Activated CD8-positive, alpha-beta memory T cell treated with anti-CD3 and anti-CD28 coated beads, Interleukin-2, amount 10 ng/mL, durations not matched to agents 7 days and 5 days (primary cell): ENCODE measurements at regions of chr12 and their contacts with region 1.

Region 1: GRCh38 chr12:26884765-26885576 is 52.0 kb upstream of the ITPR2 start:
- DNase-seq: peak; percentile 90
- ATAC-seq: peak; percentile 92
- H3K4me3 Mint-ChIP-seq: peak overlapping the region; percentile 60
- H3K27ac Mint-ChIP-seq: no peak overlapping the region
- H3K4me1 Mint-ChIP-seq: peaks cover 15% of the 10 kb centered on the region
- H3K27me3 Mint-ChIP-seq: peaks cover 21% of the 10 kb centered on the region

Region 2: DNA sequence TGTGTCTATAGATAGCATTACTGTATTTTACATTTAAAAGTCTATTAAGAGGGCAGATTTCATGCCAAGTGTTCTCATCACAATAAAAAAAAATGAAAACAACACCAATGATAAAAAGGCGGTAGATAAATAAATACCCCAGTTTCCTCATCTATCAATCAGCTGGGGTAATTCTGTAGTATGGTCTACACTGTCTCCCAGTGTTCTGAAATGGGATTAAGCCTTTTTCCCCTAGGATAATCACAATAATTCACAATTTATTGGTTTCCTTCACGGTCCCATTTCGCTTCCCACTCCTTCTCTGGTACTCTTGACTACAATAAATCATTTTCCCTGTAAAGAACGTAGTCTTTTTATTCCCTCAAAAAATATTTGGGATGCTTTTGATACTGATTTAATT is 575.3 kb before region 1 on chr12:
- CTCF ChIA-PET with region 1: no interaction called
- DNase-seq: no peak
- ATAC-seq: no peak
- H3K4me3 Mint-ChIP-seq: no peak overlapping the region
- H3K27ac Mint-ChIP-seq: no peak overlapping the region
- H3K4me1 Mint-ChIP-seq: no peaks in the 10 kb centered on the region
- H3K27me3 Mint-ChIP-seq: peaks cover 48% of the 10 kb centered on the region

Region 3: GRCh38 chr12:26360062-26360461 is 524.9 kb before region 1 on chr12:
- CTCF ChIA-PET with region 1: no interaction called
- DNase-seq: no peak
- ATAC-seq: no peak
- H3K4me3 Mint-ChIP-seq: no peak overlapping the region
- H3K27ac Mint-ChIP-seq: no peak overlapping the region
- H3K4me1 Mint-ChIP-seq: no peaks in the 10 kb centered on the region
- H3K27me3 Mint-ChIP-seq: no peaks in the 10 kb centered on the region

Region 4: DNA sequence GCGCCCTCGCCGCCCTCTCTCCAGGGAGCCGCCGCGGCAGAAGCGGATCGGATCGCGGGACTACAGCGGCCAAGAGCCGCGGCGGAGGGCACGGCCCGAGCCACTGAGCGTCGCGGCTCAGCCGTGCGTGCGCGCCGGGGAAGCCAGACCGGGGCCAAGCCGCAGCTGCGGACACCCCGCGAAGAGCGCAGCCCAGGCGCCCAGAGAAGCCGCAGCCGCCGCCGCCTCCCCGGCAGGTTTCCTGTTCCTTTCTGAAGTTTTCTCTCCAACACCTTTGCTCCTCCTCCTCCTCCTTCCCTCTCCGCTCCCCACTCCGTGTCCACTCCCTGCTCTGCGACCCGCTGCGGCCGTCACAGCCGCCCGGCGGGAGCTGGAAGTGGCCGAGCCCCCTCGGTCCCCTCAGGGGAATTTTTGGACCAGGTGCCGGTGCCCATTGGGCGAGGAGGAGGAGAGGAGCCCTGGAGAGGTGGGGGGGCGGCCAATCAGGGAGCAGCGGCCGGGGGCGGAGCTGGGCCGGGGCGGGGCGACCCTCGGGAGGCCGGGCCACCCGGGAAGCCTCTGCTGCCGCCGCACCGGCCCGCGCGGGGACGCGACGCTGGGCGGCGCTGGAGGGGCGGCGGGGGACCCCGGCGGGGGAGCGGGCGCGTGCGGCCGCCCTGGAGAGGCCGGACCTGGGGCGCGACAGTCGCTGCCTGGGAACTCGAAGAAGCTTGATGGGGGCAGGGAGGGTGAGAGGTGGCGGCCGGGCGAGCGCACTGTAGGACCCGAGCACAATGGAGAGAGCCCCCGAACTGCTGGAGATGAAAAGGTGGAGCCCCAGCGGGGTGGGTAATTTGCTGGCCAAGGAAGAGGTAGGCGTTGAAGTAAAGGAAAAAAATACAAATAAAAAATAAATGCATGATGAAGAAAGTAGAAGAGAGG is 51.9 kb before region 1 on chr12 and contains the start of gene ITPR2:
- CTCF ChIA-PET with region 1: interaction called, 34 read pairs
- DNase-seq: peak; percentile 95
- ATAC-seq: peak; percentile 92
- H3K4me3 Mint-ChIP-seq: peak within 1 kb of the TSS; percentile 94
- H3K27ac Mint-ChIP-seq: peak within 1 kb of the TSS; percentile 99
- H3K4me1 Mint-ChIP-seq: peaks cover 36% of the 10 kb centered on the region
- H3K27me3 Mint-ChIP-seq: no peaks in the 10 kb centered on the region
- total RNA-seq, gene ITPR2: 31.1 to 37.7 TPM

Region 5: GRCh38 chr12:26853303-26854030 is 31.5 kb before region 1 on chr12:
- CTCF ChIA-PET with region 1: interaction called, 34 read pairs
- DNase-seq: peak; percentile 84
- ATAC-seq: peak; percentile 95
- H3K4me3 Mint-ChIP-seq: no peak overlapping the region
- H3K27ac Mint-ChIP-seq: peak overlapping the region; percentile 41
- H3K4me1 Mint-ChIP-seq: no peaks in the 10 kb centered on the region
- H3K27me3 Mint-ChIP-seq: peaks cover 12% of the 10 kb centered on the region

Region 6: GRCh38 chr12:26896913-26897312 is 11.9 kb after region 1 on chr12:
- CTCF ChIA-PET with region 1: interaction called, 13 read pairs
- DNase-seq: no peak
- ATAC-seq: no peak
- H3K4me3 Mint-ChIP-seq: no peak overlapping the region
- H3K27ac Mint-ChIP-seq: no peak overlapping the region
- H3K4me1 Mint-ChIP-seq: no peaks in the 10 kb centered on the region
- H3K27me3 Mint-ChIP-seq: no peaks in the 10 kb centered on the region

Region 7: DNA sequence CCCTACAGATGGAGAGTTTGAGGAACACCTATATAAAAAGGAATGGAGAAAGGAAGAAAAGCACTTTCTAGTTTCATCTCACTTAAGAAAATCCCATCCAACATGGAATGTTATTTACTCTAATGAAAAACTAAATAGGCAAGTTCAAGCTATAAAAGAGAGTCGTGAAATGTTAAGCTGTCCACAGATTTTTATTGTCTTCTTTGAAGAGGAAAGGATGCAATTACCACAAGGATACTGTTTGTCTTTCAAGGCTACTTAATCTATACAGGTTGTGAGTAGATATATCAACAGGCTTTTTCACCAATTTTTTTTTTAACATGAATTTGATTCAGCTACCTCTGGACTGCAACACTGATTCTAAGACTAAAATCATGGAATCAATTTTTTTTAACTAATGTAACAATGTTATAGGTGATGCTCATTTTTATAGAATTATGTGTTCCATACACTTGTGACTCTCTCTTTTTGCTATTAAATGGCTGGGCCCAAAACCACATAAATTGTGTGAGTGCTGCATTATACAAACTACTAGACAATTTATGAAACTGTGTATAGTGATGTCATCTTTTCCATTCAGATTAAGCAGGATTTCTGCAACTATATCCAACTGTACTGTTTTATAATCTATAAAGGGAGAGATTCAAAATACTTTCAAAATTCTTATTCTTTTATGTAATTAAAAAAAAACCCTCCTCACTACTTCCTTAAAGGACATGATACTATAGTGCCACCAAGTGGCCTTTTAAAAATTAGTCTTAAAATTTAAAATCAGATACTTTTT is 420.9 kb after region 1 on chr12:
- CTCF ChIA-PET with region 1: interaction called, 11 read pairs
- DNase-seq: no peak
- ATAC-seq: no peak
- H3K4me3 Mint-ChIP-seq: no peak overlapping the region
- H3K27ac Mint-ChIP-seq: no peak overlapping the region
- H3K4me1 Mint-ChIP-seq: peaks cover 26% of the 10 kb centered on the region
- H3K27me3 Mint-ChIP-seq: no peaks in the 10 kb centered on the region